Dendritic cell treated with granulocyte-macrophage colony-stimulating factor and Interleukin-4, amounts not matched to agents 40 ng/mL and 50 ng/mL, for 4 days (primary cell): ENCODE measurements at regions of chr16 and their contacts with region 1.

Region 1: DNA sequence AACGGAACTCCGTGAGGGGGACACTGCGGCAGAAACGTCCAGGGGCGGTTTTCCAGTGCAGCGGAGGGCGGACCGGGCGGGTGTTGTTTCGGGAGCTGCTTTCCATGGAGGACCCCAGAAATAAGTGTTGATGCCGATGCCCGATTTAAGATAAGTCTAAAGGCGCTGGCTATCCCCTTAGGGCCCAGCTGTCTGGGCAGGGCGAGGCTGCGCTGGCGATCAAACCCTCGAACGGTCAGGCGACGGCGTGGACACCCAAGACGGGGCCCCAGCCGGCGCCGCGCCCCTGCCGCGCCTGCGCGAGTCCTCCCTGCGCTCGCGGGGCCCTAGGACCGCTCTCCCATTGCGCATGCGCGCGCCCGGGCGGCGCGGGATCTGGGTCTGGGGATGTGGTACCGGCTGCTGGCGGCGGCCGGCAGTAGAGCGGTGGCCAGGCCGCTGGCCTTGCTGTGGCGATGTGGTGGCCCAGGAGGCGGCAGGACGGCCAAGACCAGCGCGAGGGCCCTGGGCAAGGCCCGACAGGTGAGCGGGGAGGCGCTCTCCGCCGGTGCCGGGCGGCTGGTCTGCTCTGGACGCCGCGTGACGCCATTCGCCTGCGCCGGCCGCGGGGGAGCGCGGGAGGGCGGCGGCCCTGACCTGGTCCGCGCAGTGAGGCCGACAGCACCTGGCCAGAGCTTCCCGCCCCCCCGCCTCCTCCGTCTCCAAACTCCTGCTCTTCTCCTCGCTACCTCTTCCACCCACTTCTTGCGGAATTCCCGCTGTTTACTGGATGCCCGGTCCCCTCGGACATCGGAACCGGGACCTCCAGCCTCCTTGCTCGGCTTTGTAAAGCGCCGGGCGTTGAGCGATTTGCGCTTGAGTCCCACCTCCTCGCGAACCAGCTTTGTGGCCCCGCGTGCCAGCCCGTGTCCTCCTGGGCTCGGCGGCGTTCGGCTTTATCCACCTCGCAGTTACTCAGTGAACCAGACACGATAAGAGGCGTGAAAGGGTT is 24.0 kb downstream of the DEF8 start:
- H3K4me3 Mint-ChIP-seq: peak overlapping the region; percentile 86
- H3K27ac Mint-ChIP-seq: peak overlapping the region; percentile 93
- H3K4me1 Mint-ChIP-seq: peaks cover 47% of the 10 kb centered on the region
- H3K27me3 Mint-ChIP-seq: no peaks in the 10 kb centered on the region

Region 2: DNA sequence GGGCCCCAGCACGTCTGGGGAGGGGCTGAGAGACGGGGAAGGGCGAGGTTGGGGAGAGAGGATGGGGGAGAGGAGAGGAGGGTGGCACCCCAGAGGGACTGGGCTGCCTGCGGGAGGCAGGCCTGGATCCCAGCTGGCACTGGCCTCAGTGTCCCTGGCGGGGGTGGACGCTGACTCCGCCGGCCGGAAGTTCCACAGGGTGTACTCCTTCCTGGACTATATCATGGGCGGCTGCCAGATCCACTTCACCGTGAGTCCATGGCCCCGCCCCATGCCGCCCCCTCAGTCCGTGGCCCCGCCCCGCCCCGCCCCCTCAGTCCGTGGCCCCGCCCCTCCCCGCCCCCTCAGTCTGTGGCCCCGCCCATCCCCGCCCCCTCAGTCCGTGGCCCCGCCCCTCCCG is 385.7 kb before region 1 on chr16:
- intact Hi-C with region 1: no loop called
- H3K4me3 Mint-ChIP-seq: no peak overlapping the region
- H3K27ac Mint-ChIP-seq: no peak overlapping the region
- H3K4me1 Mint-ChIP-seq: no peaks in the 10 kb centered on the region
- H3K27me3 Mint-ChIP-seq: no peaks in the 10 kb centered on the region

Region 3: GRCh38 chr16:89922884-89923690 is 49.5 kb before region 1 on chr16 and contains the start of gene TUBB3:
- intact Hi-C with region 1: loop called (anchors 5 kb)
- H3K4me3 Mint-ChIP-seq: peak within 1 kb of the TSS; percentile 71
- H3K27ac Mint-ChIP-seq: peak within 1 kb of the TSS; percentile 44
- H3K4me1 Mint-ChIP-seq: peaks cover 63% of the 10 kb centered on the region
- H3K27me3 Mint-ChIP-seq: peaks cover 82% of the 10 kb centered on the region

Region 4: DNA sequence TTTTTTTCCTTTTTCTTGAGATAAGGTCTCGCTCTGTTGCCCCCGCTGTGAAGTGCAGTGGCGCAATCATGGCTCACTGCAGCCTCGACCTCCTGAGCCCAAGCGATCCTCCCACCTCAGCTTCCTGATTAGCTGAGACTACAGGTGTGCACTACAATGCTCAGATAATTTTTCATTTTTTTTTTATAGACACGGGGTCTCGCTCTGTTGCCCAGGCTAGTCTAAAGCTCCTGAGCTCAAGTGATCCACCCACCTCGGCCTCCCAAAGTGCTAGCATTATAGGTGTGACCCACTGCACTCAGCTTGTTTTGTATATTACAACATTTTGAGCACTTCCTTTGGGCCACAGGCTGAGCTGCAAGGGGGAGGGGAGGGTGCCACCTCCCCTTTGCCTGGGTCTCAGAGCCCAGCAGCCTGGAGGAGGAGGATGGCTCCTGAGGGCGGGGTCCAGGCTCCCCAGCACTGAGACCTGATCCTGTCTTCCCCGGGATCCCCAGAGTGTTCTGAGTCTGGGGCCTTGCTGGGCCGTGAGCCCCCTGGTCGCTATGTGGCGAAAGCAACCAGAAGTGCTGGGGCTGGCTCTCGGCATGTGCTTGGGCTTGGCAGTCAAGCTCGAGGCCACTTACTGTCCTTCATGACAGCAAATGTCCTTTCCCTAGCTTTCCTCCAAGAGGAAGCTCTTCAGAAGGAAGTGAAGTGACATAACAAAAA is 15.9 kb before region 1 on chr16:
- intact Hi-C with region 1: loop called (anchors 2 kb)
- H3K4me3 Mint-ChIP-seq: peak overlapping the region; percentile 84
- H3K27ac Mint-ChIP-seq: peak overlapping the region; percentile 91
- H3K4me1 Mint-ChIP-seq: peaks cover 89% of the 10 kb centered on the region
- H3K27me3 Mint-ChIP-seq: no peaks in the 10 kb centered on the region

Region 5: DNA sequence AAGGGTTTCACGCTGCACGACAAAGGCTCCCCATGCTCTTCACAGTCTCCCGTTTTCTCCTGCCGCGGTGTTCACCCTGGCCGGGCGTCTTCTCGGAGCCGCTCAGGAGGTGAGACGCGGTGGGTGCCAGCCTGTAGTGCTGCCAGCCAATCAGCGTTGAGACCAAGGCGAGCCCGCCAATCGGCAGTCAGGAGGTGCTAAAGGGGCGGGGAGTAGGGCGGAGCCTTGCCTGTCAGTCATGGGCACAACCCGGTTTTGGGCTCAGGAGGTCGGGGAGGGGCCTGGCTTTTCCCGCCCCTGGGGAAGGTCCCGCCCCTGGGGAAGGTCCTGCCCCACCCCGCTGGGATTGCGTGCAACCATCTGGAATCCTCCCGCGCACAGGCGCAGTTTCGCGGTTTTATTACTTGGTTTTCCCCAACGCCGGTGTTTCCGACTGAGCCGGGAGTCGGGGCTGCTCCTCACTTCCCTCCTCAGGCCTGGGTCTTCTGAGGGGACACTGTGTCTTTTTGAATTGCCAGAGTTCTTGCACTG is 104.8 kb after region 1 on chr16 and contains the start of gene PRDM7:
- intact Hi-C with region 1: no loop called
- H3K4me3 Mint-ChIP-seq: peak within 1 kb of the TSS; percentile 73
- H3K27ac Mint-ChIP-seq: peak within 1 kb of the TSS; percentile 88
- H3K4me1 Mint-ChIP-seq: peaks cover 30% of the 10 kb centered on the region
- H3K27me3 Mint-ChIP-seq: peaks cover 11% of the 10 kb centered on the region